ENCODE measurements at regions of chr11 and their contacts with region 1.

Region 1: DNA sequence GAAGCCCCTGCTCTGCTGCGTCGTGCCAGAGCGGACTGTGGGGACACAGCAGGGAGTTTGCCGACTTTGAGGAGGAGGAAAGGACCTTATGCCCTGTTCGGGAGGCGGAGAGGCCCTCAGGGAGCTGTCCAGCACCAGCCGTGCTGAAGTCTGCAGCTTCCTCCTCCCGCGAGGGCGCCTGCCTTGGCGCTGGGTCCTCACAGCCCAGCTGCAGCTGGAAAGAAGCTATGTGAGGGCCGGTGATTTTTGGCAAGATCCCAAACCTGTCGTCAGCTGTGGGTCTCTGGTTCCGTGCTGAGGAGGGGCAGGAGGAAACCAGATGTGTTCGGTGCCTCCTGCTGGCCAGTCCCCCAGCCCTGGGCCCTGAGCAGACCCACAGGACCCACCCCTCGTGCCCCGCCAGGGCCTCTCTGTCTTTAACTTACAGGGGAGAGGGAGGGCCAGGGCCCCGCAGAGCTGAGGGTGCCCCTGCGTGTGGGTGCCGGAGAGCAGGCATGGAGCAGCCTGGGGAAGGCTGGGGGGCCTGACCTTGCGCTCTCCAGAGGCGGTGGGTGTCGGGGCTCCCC is 12.0 kb downstream of the BRSK2 start:
- DNase-seq: peak; percentile 43 to 56
- H3K4me3 ChIP-seq: no peak overlapping the region
- H3K27ac ChIP-seq: no peak overlapping the region
- H3K4me1 ChIP-seq: no peaks in the 10 kb centered on the region
- H3K27me3 ChIP-seq: no peaks in the 10 kb centered on the region
- CTCF ChIP-seq: peak in 1 of 4 experiments; percentile 5
- POLR2A ChIP-seq: no peak

Region 2: DNA sequence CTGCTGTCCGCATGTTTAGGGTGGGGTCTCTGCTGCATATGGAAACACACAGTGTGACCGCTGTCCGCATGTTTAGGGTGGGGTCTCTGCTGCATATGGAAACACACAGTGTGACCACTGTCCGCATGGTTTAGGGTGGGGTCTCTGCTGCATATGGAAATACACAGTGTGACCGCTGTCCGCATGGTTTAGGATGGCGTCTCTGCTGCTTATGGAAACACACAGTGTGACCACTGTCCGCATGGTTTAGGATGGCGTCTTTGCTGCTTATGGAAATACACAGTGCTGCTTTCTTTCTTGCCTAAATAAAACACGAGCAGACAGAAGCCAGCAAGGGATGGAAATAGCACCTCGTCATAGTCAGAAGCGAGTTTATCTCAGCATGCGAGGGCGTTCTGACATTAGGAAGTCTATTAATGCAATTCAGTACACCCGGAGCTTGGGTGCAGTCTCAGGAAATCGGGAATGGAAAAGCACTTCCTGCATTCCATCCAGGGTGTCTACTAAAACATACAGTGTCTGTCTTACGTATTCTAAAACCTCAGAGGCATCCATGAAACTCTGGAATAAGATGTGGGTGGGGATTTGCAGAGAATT is 59.7 kb before region 1 on chr11:
- intact Hi-C with region 1: loop called (anchors 10 kb)
- DNase-seq: no peak
- H3K4me3 ChIP-seq: no peak overlapping the region
- H3K27ac ChIP-seq: no peak overlapping the region
- H3K4me1 ChIP-seq: no peaks in the 10 kb centered on the region
- H3K27me3 ChIP-seq: no peaks in the 10 kb centered on the region
- CTCF ChIP-seq: no peak
- POLR2A ChIP-seq: no peak